Heart left ventricle (tissue), 16 donors: ENCODE measurements at regions of chr1 and their contacts with region 1.

Region 1: GRCh38 chr1:151739590-151740375 is 18.5 kb downstream of the RIIAD1 start:
- DNase-seq: no peak
- ATAC-seq: no peak
- H3K4me3 ChIP-seq: no peak overlapping the region
- H3K27ac ChIP-seq: no peak overlapping the region
- H3K4me1 ChIP-seq: no peaks in the 10 kb centered on the region
- H3K27me3 ChIP-seq: no peaks in the 10 kb centered on the region
- CTCF ChIP-seq: no peak
- POLR2A ChIP-seq: no peak

Region 2: GRCh38 chr1:151443846-151444782 is 295.7 kb before region 1 on chr1:
- intact Hi-C with region 1: loop called (anchors 2 to 10 kb)
- DNase-seq: peak in 3 of 5 donors; percentile 29 to 47 (median 39)
- ATAC-seq: peak; percentile 57 to 88 (median 84)
- H3K4me3 ChIP-seq: no peak overlapping the region
- H3K27ac ChIP-seq: peak overlapping the region in 3 of 12 donors; percentile 5 to 46 (median 42)
- H3K4me1 ChIP-seq: peaks cover 0 to 51% (median 33%) of the 10 kb centered on the region in 12 donors
- H3K27me3 ChIP-seq: no peaks in the 10 kb centered on the region
- CTCF ChIP-seq: peak; percentile 47 to 83 (median 70)
- POLR2A ChIP-seq: no peak

Region 3: DNA sequence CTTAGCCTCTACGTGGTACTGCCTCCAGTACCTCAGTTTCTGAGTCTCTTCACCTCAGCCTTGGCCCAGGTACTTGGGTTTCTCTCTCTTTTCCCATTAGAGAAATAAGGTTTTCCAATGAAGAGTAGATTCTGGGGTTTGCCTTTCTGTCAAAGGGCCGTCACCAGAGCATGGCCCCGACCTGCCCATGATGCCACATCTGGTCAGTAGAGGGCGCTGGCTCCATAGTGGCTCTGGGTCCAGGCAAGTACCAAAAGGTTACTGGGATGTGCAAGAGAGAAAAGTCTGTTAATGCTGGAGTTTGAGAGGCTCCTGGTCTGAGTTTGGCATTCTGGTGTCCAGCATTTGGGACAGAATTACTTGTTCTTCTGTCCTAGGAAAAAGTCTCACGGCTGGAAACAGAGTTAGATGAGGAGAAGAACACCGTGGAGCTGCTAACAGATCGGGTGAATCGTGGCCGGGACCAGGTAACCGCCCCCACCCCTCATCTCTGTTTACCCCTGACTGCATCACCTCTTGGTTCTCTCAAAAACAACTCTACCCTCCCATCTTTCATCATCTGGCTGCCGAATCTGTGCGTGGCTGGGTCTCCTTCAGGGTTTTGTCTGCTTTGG is 205.0 kb before region 1 on chr1:
- intact Hi-C with region 1: loop called in 9 of 10 experiments (anchors 1 to 5 kb)
- DNase-seq: peak; percentile 65 to 88 (median 75)
- ATAC-seq: peak; percentile 68 to 75 (median 70)
- H3K4me3 ChIP-seq: no peak overlapping the region
- H3K27ac ChIP-seq: no peak overlapping the region
- H3K4me1 ChIP-seq: peaks cover 0 to 8% (median 6%) of the 10 kb centered on the region in 12 donors
- H3K27me3 ChIP-seq: no peaks in the 10 kb centered on the region
- CTCF ChIP-seq: peak; percentile 67 to 92 (median 80)
- POLR2A ChIP-seq: no peak

Region 4: GRCh38 chr1:151539990-151540981 is 199.5 kb before region 1 on chr1 and contains the start of gene TUFT1:
- intact Hi-C with region 1: loop called in 6 of 10 experiments (anchors 2 to 5 kb)
- DNase-seq: peak; percentile 89 to 94 (median 94)
- ATAC-seq: peak; percentile 96 to 98 (median 98)
- H3K4me3 ChIP-seq: peak within 1 kb of the TSS; percentile 38 to 82 (median 76)
- H3K27ac ChIP-seq: peak within 1 kb of the TSS in 10 of 12 donors; percentile 28 to 86 (median 62)
- H3K4me1 ChIP-seq: peaks cover 0 to 21% (median 12%) of the 10 kb centered on the region in 12 donors
- H3K27me3 ChIP-seq: no peaks in the 10 kb centered on the region
- CTCF ChIP-seq: no peak
- POLR2A ChIP-seq: peak; percentile 83 to 88
- total RNA-seq, gene TUFT1: 2.1 to 13.6 (median 4.3) TPM

Region 5: GRCh38 chr1:151594143-151594625 is 145.6 kb before region 1 on chr1:
- intact Hi-C with region 1: loop called (anchors 1 to 5 kb)
- DNase-seq: peak; percentile 60 to 84 (median 71)
- ATAC-seq: peak in 3 of 4 donors; percentile 61 to 67 (median 62)
- H3K4me3 ChIP-seq: peak overlapping the region in 3 of 12 donors; percentile 5 to 18 (median 13)
- H3K27ac ChIP-seq: no peak overlapping the region
- H3K4me1 ChIP-seq: peaks cover 0 to 7% (median 0%) of the 10 kb centered on the region in 12 donors
- H3K27me3 ChIP-seq: peaks cover 0 to 5% (median 0%) of the 10 kb centered on the region in 9 donors
- CTCF ChIP-seq: peak; percentile 79 to 94 (median 88)
- POLR2A ChIP-seq: no peak

Region 6: DNA sequence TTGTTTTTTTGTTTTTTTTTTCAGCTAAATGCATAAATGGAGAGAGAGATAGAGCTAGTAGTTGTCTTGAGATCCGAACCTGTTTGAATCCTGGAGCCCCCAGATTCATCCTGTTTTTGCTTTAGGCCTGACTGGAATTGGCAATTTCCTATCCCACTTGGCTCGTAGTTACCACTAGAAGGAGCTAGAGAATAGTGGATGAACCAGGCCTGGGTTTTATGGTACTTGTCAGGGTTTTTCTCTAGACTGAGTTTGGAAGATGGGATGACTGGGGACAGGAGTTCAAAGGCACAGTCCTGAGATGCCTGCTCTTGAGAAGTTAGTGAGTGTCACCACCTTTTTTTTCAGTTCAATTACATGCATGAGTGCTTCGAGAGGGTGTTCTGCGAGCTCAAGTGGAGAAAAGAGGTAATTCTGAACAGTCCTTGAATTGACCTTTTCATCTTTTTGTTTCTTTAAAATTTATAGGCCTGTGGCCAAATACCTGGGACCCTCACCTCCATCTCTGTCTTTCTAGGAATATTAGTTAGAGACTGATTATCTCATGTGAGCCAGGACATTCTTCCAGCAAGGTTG is 46.6 kb before region 1 on chr1:
- intact Hi-C with region 1: loop called in 7 of 10 experiments (anchors 1 to 5 kb)
- DNase-seq: no peak
- ATAC-seq: peak in 2 of 4 donors; percentile 38 to 43
- H3K4me3 ChIP-seq: no peak overlapping the region
- H3K27ac ChIP-seq: no peak overlapping the region
- H3K4me1 ChIP-seq: peaks cover 0 to 13% (median 0%) of the 10 kb centered on the region in 12 donors
- H3K27me3 ChIP-seq: no peaks in the 10 kb centered on the region
- CTCF ChIP-seq: peak; percentile 17 to 61 (median 45)
- POLR2A ChIP-seq: no peak

Region 7: DNA sequence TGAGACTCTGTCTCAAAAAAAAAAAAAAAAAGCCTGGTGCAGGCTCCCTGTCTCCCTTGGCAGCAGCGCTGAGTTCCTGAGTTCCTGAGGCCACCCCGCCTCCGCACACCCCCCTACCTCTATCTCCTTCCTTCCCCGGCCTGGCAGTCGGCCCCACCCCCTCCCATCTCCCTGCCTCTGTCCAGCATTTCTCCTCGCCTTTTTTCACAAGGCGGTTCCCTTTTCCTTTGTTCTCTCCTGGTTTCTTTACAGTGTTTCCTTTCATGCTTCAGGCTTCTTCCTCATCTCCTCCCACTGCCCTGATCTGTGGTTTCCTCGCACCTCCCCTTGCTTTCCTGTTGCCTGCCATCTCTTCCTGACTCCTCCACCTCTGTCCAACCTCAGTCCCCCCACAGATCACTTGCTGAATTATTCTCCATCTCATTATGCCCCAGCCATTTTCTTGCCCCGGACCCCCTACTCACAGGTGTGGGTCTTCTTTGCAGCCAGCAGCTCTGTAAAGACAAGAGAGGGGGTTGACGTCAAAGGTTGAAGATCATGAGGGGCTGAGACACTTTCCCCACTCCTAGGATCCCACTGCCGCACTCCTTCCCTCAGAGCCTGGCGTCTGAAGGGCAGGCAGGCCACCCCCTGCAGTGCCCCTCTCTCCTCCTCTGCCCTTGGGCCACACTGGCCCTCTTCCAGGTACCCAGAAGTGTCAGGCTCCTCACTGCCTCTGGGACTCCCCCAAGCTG is 89.3 kb after region 1 on chr1:
- intact Hi-C with region 1: no loop called
- DNase-seq: peak; percentile 54 to 65 (median 59)
- ATAC-seq: peak in 2 of 4 donors; percentile 18 to 27
- H3K4me3 ChIP-seq: no peak overlapping the region
- H3K27ac ChIP-seq: peak overlapping the region in 1 of 12 donors; percentile 27
- H3K4me1 ChIP-seq: peaks cover 0 to 48% (median 17%) of the 10 kb centered on the region in 12 donors
- H3K27me3 ChIP-seq: no peaks in the 10 kb centered on the region
- CTCF ChIP-seq: no peak
- POLR2A ChIP-seq: no peak